HEK293 (cell line): ENCODE measurements at regions of chr9 and their contacts with region 1.

Region 1: DNA sequence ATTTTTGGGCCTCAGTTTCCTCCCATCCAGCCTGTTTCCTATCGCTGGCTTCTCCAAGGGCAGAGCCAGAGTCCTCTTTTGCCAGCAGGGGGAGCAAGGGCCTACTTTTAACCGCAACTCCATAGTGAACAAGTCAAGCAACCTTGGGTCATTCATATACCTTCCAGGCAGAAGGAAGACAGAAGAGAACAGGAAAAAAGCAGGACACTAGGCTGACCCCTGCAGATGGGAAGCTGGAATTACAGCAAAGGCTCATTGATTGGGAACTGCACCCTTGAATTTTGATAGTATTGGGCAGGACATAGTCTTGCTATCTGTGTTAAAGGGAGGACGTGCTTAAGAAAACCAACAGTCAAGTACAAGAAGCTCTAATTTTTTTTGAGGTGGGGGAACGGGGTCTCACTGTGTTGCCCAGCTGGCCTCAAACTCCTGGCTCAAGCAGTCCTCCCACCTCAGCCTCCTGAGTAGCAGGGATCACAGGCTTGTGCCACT is 30.1 kb downstream of the QRFP start:
- H3K4me3 ChIP-seq: peak overlapping the region; percentile 7; the same call in 1 of the 2 replicates
- H3K27ac ChIP-seq: no peak overlapping the region
- H3K4me1 ChIP-seq: no peaks in the 10 kb centered on the region
- CTCF ChIP-seq: peak; percentile 85

Region 2: GRCh38 chr9:130672466-130672865 is 194.1 kb before region 1 on chr9:
- CTCF ChIA-PET with region 1: no interaction called
- POLR2A ChIA-PET with region 1: no interaction called
- H3K4me3 ChIP-seq: no peak overlapping the region
- H3K27ac ChIP-seq: no peak overlapping the region
- H3K4me1 ChIP-seq: no peaks in the 10 kb centered on the region
- CTCF ChIP-seq: no peak

Region 3: GRCh38 chr9:130701056-130702022 is 165.2 kb before region 1 on chr9:
- CTCF ChIA-PET with region 1: interaction called, 400 read pairs
- POLR2A ChIA-PET with region 1: interaction called, 5 read pairs
- H3K4me3 ChIP-seq: no peak overlapping the region
- H3K27ac ChIP-seq: no peak overlapping the region
- H3K4me1 ChIP-seq: no peaks in the 10 kb centered on the region
- CTCF ChIP-seq: peak; percentile 88

Region 4: GRCh38 chr9:130756037-130756436 is 110.5 kb before region 1 on chr9:
- CTCF ChIA-PET with region 1: interaction called, 11 read pairs
- POLR2A ChIA-PET with region 1: no interaction called
- H3K4me3 ChIP-seq: no peak overlapping the region
- H3K27ac ChIP-seq: no peak overlapping the region
- H3K4me1 ChIP-seq: no peaks in the 10 kb centered on the region
- CTCF ChIP-seq: no peak

Region 5: GRCh38 chr9:130834371-130835311 is 31.9 kb before region 1 on chr9 and contains the start of gene ABL1:
- CTCF ChIA-PET with region 1: interaction called, 57 read pairs
- POLR2A ChIA-PET with region 1: interaction called, 4 read pairs
- H3K4me3 ChIP-seq: peak within 1 kb of the TSS; percentile 75
- H3K27ac ChIP-seq: peak within 1 kb of the TSS; percentile 82
- H3K4me1 ChIP-seq: peaks cover 6% of the 10 kb centered on the region
- CTCF ChIP-seq: peak; percentile 11; the same call in 1 of the 2 replicates

Region 6: GRCh38 chr9:130852801-130853200 is 13.7 kb before region 1 on chr9:
- CTCF ChIA-PET with region 1: interaction called, 55 read pairs
- POLR2A ChIA-PET with region 1: no interaction called
- H3K4me3 ChIP-seq: no peak overlapping the region
- H3K27ac ChIP-seq: no peak overlapping the region
- H3K4me1 ChIP-seq: no peaks in the 10 kb centered on the region
- CTCF ChIP-seq: no peak

Region 7: DNA sequence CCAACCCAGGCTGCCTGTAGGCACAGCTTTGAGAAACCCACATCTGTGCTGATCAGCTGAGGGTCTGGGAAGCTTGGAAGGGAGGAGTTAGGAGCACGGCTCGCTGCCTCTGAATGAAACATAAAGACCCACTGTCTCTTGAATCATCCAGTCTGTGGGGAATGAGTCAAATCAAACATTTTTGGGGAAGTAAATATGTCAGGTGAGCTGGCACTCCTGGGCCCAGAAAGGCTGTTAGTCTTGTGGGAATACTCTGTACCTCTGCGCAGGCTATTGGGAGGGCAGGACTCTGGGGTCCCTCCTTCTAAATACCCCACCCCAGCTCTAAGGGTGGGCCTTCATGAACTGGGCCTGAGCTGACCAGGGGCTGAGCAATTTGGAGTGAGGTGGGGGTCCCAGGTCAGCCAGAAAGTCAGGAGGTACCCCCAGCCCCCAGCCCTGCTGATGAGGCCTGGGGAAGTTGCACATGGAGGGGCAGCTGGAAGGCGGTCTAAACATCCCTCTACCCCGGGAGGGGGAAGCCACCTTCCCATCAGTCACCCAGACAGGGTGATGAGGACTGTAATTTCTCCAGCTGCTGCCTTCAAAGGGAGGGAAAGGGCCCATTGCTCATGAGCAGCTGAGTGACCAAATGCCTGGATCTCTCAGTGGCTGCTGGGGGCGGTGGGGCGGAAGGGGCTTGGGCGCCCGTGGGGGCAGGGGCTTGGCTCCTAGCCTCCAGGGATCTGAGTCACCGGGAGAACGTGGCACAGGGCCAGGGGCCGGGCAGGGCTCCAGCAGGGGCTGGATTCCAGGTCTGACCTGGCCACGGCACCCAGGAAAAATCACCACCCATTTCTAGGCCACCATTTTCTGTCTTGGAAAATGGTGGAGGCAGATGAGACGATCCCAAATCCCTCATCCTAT is 61.7 kb after region 1 on chr9:
- CTCF ChIA-PET with region 1: interaction called, 17 read pairs
- POLR2A ChIA-PET with region 1: no interaction called
- H3K4me3 ChIP-seq: no peak overlapping the region
- H3K27ac ChIP-seq: peak overlapping the region; percentile 19; the same call in 1 of the 2 replicates
- H3K4me1 ChIP-seq: peaks cover 3% of the 10 kb centered on the region; the same call in 1 of the 2 replicates
- CTCF ChIP-seq: no peak

Region 8: GRCh38 chr9:130997925-130998596 is 131.5 kb after region 1 on chr9:
- CTCF ChIA-PET with region 1: interaction called, 242 read pairs
- POLR2A ChIA-PET with region 1: interaction called, 6 read pairs
- H3K4me3 ChIP-seq: no peak overlapping the region
- H3K27ac ChIP-seq: no peak overlapping the region
- H3K4me1 ChIP-seq: no peaks in the 10 kb centered on the region
- CTCF ChIP-seq: peak; percentile 96

Region 9: GRCh38 chr9:131129183-131129582 is 262.7 kb after region 1 on chr9:
- CTCF ChIA-PET with region 1: no interaction called
- POLR2A ChIA-PET with region 1: no interaction called
- H3K4me3 ChIP-seq: no peak overlapping the region
- H3K27ac ChIP-seq: no peak overlapping the region
- H3K4me1 ChIP-seq: no peaks in the 10 kb centered on the region
- CTCF ChIP-seq: no peak

Region 10: DNA sequence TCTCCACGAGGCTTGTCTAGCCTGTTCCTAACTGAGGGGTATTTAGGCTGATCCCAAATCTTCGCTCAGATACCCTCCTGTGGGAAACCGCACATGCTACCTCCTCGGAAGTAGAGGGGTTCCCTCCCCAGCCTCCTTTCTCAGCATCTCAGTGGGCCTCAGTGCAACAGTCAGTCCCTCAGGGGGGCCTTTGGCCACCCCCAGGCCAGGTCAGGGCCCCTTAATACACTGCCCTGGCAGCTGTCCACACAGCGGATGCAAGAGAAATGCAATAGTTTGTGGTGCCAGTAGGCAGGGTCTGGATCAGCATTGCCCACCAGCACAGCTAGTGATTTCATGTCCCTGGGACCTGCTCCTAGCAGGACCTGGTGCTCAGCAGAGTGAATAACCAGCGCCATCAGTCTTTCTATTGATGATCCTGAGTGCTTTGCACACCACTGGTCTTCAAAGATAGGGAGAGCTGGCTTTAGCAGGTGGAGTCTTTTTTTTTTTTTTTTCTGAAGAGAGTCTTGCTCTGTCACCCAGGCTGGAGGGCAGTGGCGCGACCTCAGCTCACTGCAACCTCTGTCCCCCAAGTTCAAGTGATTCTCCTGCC is 430.5 kb after region 1 on chr9:
- CTCF ChIA-PET with region 1: no interaction called
- POLR2A ChIA-PET with region 1: no interaction called
- H3K4me3 ChIP-seq: no peak overlapping the region
- H3K27ac ChIP-seq: no peak overlapping the region
- H3K4me1 ChIP-seq: no peaks in the 10 kb centered on the region
- CTCF ChIP-seq: no peak